Left ventricle myocardium superior (tissue), 1 donor: ENCODE measurements at regions of chr1 and their contacts with region 1.

Region 1: GRCh38 chr1:67760030-67760821 is 73.0 kb downstream of the GNG12 start:
- DNase-seq: peak; percentile 62
- ATAC-seq: peak; percentile 74

Region 2: DNA sequence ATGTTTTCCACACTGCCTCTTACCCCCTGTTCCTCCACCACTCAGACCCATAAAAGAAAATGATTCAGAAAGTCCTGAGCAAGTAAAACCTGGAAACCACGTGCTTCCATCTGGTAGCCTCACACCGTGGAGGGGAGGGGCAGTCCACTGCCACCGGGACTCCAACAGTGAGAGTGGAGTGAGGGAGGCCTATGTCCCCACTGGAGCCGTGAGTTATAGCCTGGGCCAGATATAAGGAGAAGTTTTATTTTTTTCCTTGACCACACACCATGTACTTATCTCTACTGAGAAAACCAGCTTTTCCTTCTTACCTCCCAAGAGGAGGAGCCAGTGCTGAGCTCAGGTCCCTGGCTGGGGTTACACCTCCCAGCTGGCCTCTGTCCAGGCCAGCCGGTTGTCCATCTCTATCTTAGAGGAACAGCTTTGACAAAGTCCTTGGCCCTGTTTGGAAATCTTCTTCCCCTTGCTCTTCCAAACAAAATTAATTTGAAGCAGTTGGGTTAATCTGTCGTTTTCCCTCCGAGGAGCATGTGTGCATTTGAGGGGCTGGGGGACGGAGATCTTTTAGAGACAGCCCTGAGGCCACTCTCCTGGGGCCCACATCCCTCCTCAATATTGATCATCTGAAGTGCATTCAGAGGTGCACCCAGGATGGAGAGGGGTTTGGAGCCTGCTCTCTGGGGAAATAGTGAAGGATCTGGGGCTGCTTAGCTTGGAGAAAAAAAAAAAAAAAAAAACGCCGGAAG is 280.9 kb before region 1 on chr1:
- intact Hi-C with region 1: no loop called
- DNase-seq: peak; percentile 36
- ATAC-seq: peak; percentile 78

Region 3: GRCh38 chr1:67535474-67535873 is 224.8 kb before region 1 on chr1:
- intact Hi-C with region 1: loop called (anchors 2 kb)
- DNase-seq: peak; percentile 78
- ATAC-seq: peak; percentile 78